ENCODE measurements at regions of chr5 and their contacts with region 1.

Region 1: GRCh38 chr5:36060420-36060887 is 6.2 kb downstream of the UGT3A2 start:
- DNase-seq: no peak
- ATAC-seq: peak; percentile 65
- H3K4me3 ChIP-seq: no peak overlapping the region
- H3K27ac ChIP-seq: no peak overlapping the region
- H3K4me1 ChIP-seq: no peaks in the 10 kb centered on the region
- H3K27me3 ChIP-seq: peaks cover 0 to 6% of the 10 kb centered on the region in 2 experiments; a peak in 1 of 5 replicates
- CTCF ChIP-seq: peak; percentile 52
- EP300 ChIP-seq: no peak
- POLR2A ChIP-seq: no peak
- RAD21 ChIP-seq: no peak

Region 2: GRCh38 chr5:36079200-36079761 is 18.8 kb after region 1 on chr5:
- CTCF ChIA-PET with region 1: no interaction called
- POLR2A ChIA-PET with region 1: no interaction called
- in situ Hi-C with region 1: no loop called
- intact Hi-C with region 1: no loop called
- DNase-seq: peak; percentile 55
- ATAC-seq: peak; percentile 99
- H3K4me3 ChIP-seq: peak overlapping the region in 1 of 3 experiments; percentile 38; a peak in 1 of 6 replicates
- H3K27ac ChIP-seq: no peak overlapping the region
- H3K4me1 ChIP-seq: no peaks in the 10 kb centered on the region
- H3K27me3 ChIP-seq: no peaks in the 10 kb centered on the region
- CTCF ChIP-seq: peak; percentile 85
- EP300 ChIP-seq: no peak
- POLR2A ChIP-seq: no peak
- RAD21 ChIP-seq: peak; percentile 31; the same call in 1 of the 2 replicates

Region 3: GRCh38 chr5:36138900-36139683 is 78.6 kb after region 1 on chr5:
- CTCF ChIA-PET with region 1: no interaction called
- POLR2A ChIA-PET with region 1: no interaction called
- in situ Hi-C with region 1: no loop called
- intact Hi-C with region 1: no loop called
- DNase-seq: peak; percentile 78
- ATAC-seq: peak; percentile 100
- H3K4me3 ChIP-seq: peak overlapping the region; percentile 48 to 67 (median 60)
- H3K27ac ChIP-seq: peak overlapping the region; percentile 52
- H3K4me1 ChIP-seq: peaks cover 25% of the 10 kb centered on the region
- H3K27me3 ChIP-seq: no peaks in the 10 kb centered on the region
- CTCF ChIP-seq: no peak
- EP300 ChIP-seq: no peak
- POLR2A ChIP-seq: peak in 1 of 2 experiments; percentile 64; a peak in 2 of 4 replicates
- RAD21 ChIP-seq: no peak

Region 4: GRCh38 chr5:36214434-36214833 is 154.0 kb after region 1 on chr5:
- CTCF ChIA-PET with region 1: no interaction called
- POLR2A ChIA-PET with region 1: no interaction called
- in situ Hi-C with region 1: no loop called
- intact Hi-C with region 1: no loop called
- DNase-seq: peak; percentile 19
- ATAC-seq: no peak
- H3K4me3 ChIP-seq: no peak overlapping the region
- H3K27ac ChIP-seq: no peak overlapping the region
- H3K4me1 ChIP-seq: no peaks in the 10 kb centered on the region
- H3K27me3 ChIP-seq: no peaks in the 10 kb centered on the region
- CTCF ChIP-seq: peak; percentile 39
- EP300 ChIP-seq: no peak
- POLR2A ChIP-seq: no peak
- RAD21 ChIP-seq: no peak

Region 5: GRCh38 chr5:36270220-36270574 is 209.7 kb after region 1 on chr5:
- CTCF ChIA-PET with region 1: no interaction called
- POLR2A ChIA-PET with region 1: no interaction called
- in situ Hi-C with region 1: no loop called
- intact Hi-C with region 1: loop called (anchors 1 kb)
- DNase-seq: no peak
- ATAC-seq: no peak
- H3K4me3 ChIP-seq: no peak overlapping the region
- H3K27ac ChIP-seq: no peak overlapping the region
- H3K4me1 ChIP-seq: no peaks in the 10 kb centered on the region
- H3K27me3 ChIP-seq: no peaks in the 10 kb centered on the region; a peak in 1 of 5 replicates
- CTCF ChIP-seq: no peak
- EP300 ChIP-seq: no peak
- POLR2A ChIP-seq: no peak
- RAD21 ChIP-seq: no peak

Measured in HepG2 (cell line).